PC-3 (cell line): ENCODE measurements at regions of chr4 and their contacts with region 1.

Region 1: DNA sequence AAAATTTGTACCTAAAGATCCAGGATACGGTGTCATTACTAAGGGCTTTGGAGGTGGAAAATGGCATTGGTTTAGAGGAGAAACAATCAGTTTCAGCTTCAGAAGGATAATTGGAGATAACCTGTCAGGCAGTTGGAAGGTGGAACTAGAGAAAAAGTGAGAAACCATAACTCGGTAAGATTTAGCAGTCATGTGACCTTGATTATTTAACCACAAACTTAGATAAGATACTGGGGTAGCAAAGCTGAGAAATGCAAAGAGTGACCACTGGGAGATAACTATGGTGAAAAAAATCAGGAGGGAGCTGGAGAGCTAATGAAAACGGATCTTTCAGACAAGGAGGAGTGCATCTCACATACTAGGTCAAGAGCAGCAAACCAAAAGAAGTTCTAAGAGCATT is 58.3 kb upstream of the SMARCA5 start:
- DNase-seq: no peak
- ATAC-seq: no peak
- H3K4me3 ChIP-seq: no peak overlapping the region
- H3K27ac ChIP-seq: no peak overlapping the region
- H3K4me1 ChIP-seq: no peaks in the 10 kb centered on the region
- H3K27me3 ChIP-seq: no peaks in the 10 kb centered on the region
- CTCF ChIP-seq: no peak

Region 2: GRCh38 chr4:143307531-143307930 is 147.7 kb before region 1 on chr4:
- CTCF ChIA-PET with region 1: no interaction called
- POLR2A ChIA-PET with region 1: no interaction called
- intact Hi-C with region 1: no loop called
- DNase-seq: no peak
- ATAC-seq: no peak
- H3K4me3 ChIP-seq: no peak overlapping the region
- H3K27ac ChIP-seq: no peak overlapping the region
- H3K4me1 ChIP-seq: no peaks in the 10 kb centered on the region
- H3K27me3 ChIP-seq: no peaks in the 10 kb centered on the region
- CTCF ChIP-seq: no peak

Region 3: DNA sequence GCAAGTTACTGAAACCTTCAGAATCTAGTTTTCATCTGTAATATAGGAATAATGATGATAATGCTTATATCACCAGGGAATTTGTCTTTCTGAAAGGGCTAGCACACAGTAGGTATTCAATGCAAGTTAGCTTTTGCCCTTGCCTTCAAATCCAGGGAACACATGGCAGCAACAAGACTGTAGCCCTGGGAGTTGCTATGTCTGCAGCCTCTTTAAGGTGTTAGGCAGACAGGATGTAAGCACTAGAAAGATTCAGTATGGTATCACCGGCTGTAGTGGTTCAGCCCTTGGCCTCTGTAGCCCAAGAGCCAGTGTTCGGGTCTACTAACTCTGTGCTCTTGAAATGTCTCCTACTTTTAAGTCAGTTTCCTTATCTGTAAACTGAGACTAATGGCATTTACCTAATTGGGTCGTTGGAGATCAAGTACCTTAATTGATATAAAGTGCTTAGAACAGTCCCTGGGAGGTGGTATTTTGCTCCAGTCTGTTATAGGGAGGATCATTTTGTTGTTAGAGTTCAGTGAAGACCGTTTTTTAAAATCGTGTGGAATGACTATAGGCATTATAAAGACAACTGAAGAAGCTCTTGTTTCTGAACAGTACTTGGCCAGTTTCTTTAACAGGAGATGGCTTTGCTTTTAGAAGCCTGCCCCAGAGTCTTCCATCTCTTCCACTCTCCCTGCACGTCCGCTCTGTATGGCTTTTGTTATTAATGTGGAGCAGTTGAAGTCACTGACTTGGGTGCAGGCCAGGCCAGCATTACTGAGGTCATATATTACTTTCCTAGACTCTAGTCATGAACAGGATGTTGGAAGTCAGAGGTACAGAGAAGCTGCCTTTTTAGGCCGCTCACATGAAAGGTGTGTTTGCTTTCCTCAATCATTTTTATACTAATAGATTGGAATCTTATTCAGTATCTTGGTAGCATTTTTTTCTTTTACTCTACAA is 73.8 kb before region 1 on chr4:
- CTCF ChIA-PET with region 1: no interaction called
- POLR2A ChIA-PET with region 1: no interaction called
- intact Hi-C with region 1: no loop called
- DNase-seq: peak; percentile 88
- ATAC-seq: peak; percentile 94
- H3K4me3 ChIP-seq: peak overlapping the region; percentile 27; the same call in 1 of the 2 replicates
- H3K27ac ChIP-seq: peak overlapping the region; percentile 55
- H3K4me1 ChIP-seq: peaks cover 23% of the 10 kb centered on the region
- H3K27me3 ChIP-seq: no peaks in the 10 kb centered on the region
- CTCF ChIP-seq: no peak

Region 4: GRCh38 chr4:143513306-143514168 is 58.3 kb after region 1 on chr4 and contains the start of gene SMARCA5:
- CTCF ChIA-PET with region 1: no interaction called
- POLR2A ChIA-PET with region 1: interaction called, 23 read pairs
- intact Hi-C with region 1: no loop called
- DNase-seq: peak; percentile 99
- ATAC-seq: peak; percentile 89
- H3K4me3 ChIP-seq: peak within 1 kb of the TSS; percentile 93
- H3K27ac ChIP-seq: peak within 1 kb of the TSS; percentile 71
- H3K4me1 ChIP-seq: peaks cover 16% of the 10 kb centered on the region; the same call in 1 of the 2 replicates
- H3K27me3 ChIP-seq: peaks cover 6% of the 10 kb centered on the region; the same call in 1 of the 2 replicates
- CTCF ChIP-seq: no peak
- total RNA-seq, gene SMARCA5: 29.3 and 31.6 TPM in 2 replicates